ENCODE measurements at regions of chr1 and their contacts with region 1.

Region 1: GRCh38 chr1:150259758-150260669 is 2.4 kb downstream of the CA14 start:
- DNase-seq: peak; percentile 79
- ATAC-seq: peak; percentile 78
- H3K4me3 ChIP-seq: peak overlapping the region; percentile 42 to 78 (median 53); a peak in 5 of 6 replicates
- H3K27ac ChIP-seq: peak overlapping the region; percentile 73
- H3K4me1 ChIP-seq: peaks cover 45% of the 10 kb centered on the region
- H3K27me3 ChIP-seq: no peaks in the 10 kb centered on the region; a peak in 1 of 5 replicates
- CTCF ChIP-seq: 0 out of 2 replicates have a peak, but pooled peaks have one; percentile 17
- EP300 ChIP-seq: peak in 1 of 2 experiments; percentile 26; a peak in 1 of 4 replicates
- POLR2A ChIP-seq: 0 out of 4 replicates have a peak, but pooled peaks of 1 of the 2 experiments have one; percentile 45
- RAD21 ChIP-seq: no peak

Region 2: GRCh38 chr1:150281837-150282653 is 22.0 kb after region 1 on chr1 and contains the start of gene CIART:
- CTCF ChIA-PET with region 1: interaction called, 45 read pairs
- POLR2A ChIA-PET with region 1: interaction called, 24 read pairs
- in situ Hi-C with region 1: no loop called
- intact Hi-C with region 1: loop called (anchors 1 kb)
- DNase-seq: no peak
- ATAC-seq: peak; percentile 19; the same call in 1 of the 3 replicates
- H3K4me3 ChIP-seq: peak within 1 kb of the TSS in 1 of 3 experiments; percentile 33; a peak in 1 of 6 replicates
- H3K27ac ChIP-seq: no peak within 1 kb of the TSS
- H3K4me1 ChIP-seq: peaks cover 33% of the 10 kb centered on the region
- H3K27me3 ChIP-seq: peaks cover 0 to 4% of the 10 kb centered on the region in 2 experiments; a peak in 1 of 5 replicates
- CTCF ChIP-seq: no peak
- EP300 ChIP-seq: no peak
- POLR2A ChIP-seq: no peak
- RAD21 ChIP-seq: no peak
- total RNA-seq, gene CIART: not detected in 2 replicates

Region 3: DNA sequence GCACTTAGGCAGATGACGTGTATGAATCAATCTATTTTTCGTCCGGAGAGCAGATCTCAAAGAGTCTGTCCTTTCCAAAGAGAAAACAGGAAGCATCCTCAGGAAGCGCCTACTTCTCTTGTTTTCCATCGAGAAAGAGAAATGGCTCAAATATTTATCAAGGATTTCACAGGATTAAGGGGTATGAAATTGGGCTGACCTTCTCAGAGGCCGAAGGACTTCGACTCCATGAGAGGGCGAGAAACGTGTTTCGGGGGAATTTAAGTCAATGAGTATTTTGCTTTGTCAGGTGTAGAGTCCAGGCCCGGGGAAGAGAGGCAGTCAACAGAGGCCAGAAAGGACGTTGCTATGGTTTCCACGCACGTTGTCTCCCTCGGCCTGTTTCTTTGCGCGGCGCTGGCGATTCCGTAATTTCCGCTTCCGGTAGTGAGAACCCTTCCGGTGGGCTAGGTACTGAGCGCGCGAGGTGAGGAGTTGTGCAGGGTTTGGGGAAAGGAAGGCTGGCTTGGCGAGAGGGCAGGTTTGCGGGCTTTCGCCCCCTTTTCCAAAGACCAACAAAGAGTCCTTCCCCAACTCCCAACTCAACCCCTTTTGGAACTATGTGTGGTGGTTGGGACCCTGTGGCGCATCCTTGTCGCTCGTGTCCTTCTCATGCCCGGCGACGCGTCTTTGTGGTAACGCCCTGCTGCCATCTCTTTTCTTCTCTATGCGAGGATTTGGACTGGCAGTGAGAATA is 33.6 kb after region 1 on chr1 and contains the start of gene MRPS21:
- CTCF ChIA-PET with region 1: no interaction called
- POLR2A ChIA-PET with region 1: interaction called, 3 read pairs
- in situ Hi-C with region 1: loop called (anchors 5 kb)
- intact Hi-C with region 1: loop called (anchors 1 kb)
- DNase-seq: peak; percentile 94
- ATAC-seq: peak; percentile 99
- H3K4me3 ChIP-seq: peak within 1 kb of the TSS; percentile 81 to 86 (median 85)
- H3K27ac ChIP-seq: peak within 1 kb of the TSS; percentile 90
- H3K4me1 ChIP-seq: peaks cover 38% of the 10 kb centered on the region
- H3K27me3 ChIP-seq: no peaks in the 10 kb centered on the region; a peak in 1 of 5 replicates
- CTCF ChIP-seq: no peak; the same call in 1 of the 2 replicates
- EP300 ChIP-seq: peak in 1 of 2 experiments; percentile 57; a peak in 2 of 4 replicates
- POLR2A ChIP-seq: peak; percentile 95 to 96
- RAD21 ChIP-seq: no peak
- total RNA-seq, gene MRPS21: 64.2 and 77.5 TPM in 2 replicates

Region 4: GRCh38 chr1:150321826-150322166 is 61.8 kb after region 1 on chr1:
- CTCF ChIA-PET with region 1: no interaction called
- POLR2A ChIA-PET with region 1: interaction called, 18 read pairs
- in situ Hi-C with region 1: no loop called
- intact Hi-C with region 1: loop called (anchors 1 kb)
- DNase-seq: no peak
- ATAC-seq: no peak
- H3K4me3 ChIP-seq: peak overlapping the region; percentile 83 to 92 (median 85)
- H3K27ac ChIP-seq: peak overlapping the region; percentile 84
- H3K4me1 ChIP-seq: peaks cover 20% of the 10 kb centered on the region
- H3K27me3 ChIP-seq: no peaks in the 10 kb centered on the region; a peak in 1 of 5 replicates
- CTCF ChIP-seq: no peak
- EP300 ChIP-seq: no peak
- POLR2A ChIP-seq: no peak
- RAD21 ChIP-seq: no peak

Region 5: DNA sequence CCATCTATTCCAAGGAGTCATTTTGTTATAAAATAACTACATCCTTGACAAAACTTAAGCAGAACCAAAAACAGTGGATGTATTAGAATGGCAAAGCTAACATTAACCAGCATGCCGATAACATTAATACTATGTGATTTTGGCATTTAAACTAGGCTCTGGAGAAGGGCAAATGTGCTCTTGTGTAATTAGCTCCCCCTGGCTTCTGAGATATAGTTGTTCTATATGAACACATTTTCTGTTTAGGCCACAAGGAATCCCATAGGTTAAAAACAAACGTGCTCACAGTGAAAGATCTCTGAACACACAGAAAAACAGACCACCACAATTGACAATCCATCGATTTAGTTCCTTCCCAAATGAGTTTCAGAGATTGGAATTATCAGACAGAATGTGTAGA is 169.8 kb after region 1 on chr1:
- CTCF ChIA-PET with region 1: interaction called, 9 read pairs
- POLR2A ChIA-PET with region 1: interaction called, 3 read pairs
- in situ Hi-C with region 1: loop called (anchors 10 kb)
- intact Hi-C with region 1: no loop called
- DNase-seq: peak; percentile 57
- ATAC-seq: peak; percentile 64
- H3K4me3 ChIP-seq: no peak overlapping the region
- H3K27ac ChIP-seq: no peak overlapping the region
- H3K4me1 ChIP-seq: 0 out of 2 replicates have a peak, but pooled peaks cover 4% of the 10 kb centered on the region
- H3K27me3 ChIP-seq: no peaks in the 10 kb centered on the region
- CTCF ChIP-seq: peak; percentile 62
- EP300 ChIP-seq: no peak
- POLR2A ChIP-seq: no peak
- RAD21 ChIP-seq: peak; percentile 35; the same call in 1 of the 2 replicates

Region 6: DNA sequence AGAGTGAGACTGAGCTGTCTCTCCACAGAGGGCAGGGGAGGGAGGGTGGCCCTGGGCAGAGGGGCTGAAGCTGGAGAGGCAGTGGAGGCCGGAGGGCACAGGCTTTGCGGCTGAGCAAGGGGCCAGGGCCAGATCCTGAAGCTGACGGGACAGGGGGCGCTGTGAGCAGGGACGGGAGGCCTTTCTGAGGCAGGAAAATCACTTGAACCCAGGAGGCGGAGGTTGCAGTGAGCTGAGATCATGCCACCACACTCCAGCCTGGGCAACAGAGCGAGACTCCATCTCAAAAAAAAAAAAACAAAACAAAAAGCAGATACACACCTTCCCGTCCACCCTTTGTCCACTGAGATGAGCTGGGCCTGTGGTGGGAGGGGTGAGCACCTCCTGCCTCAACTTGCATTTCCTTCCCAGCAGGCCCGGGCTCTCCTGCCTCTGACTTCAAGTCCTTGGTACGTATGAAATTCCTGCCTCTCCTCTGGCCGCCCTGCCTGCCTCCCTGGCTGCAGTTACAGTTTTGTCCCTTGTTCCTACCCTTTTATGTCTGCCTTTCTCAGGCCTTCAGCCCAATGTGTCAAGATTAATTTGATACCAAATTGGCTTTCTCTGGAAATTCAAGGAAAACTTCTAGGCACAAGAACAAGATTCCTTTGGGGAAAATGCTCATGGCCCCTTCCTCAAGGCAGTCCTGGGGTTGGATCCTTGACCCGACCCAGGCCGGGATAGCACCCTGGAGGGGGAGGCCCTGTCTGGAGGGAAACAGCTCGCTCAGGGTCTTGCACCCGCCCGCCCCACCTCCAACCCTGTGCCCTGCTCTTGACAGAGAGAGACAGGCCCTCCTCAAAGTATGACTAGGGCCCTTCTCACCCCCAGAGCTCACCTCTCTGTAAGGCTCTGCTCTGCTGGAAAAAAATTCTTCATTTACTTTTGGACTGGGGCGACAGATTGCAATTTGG is 278.0 kb after region 1 on chr1:
- CTCF ChIA-PET with region 1: no interaction called
- POLR2A ChIA-PET with region 1: interaction called, 3 read pairs
- in situ Hi-C with region 1: loop called (anchors 10 kb)
- intact Hi-C with region 1: no loop called
- DNase-seq: no peak
- ATAC-seq: peak; percentile 64
- H3K4me3 ChIP-seq: no peak overlapping the region
- H3K27ac ChIP-seq: no peak overlapping the region
- H3K4me1 ChIP-seq: peaks cover 70% of the 10 kb centered on the region
- H3K27me3 ChIP-seq: no peaks in the 10 kb centered on the region; a peak in 1 of 5 replicates
- CTCF ChIP-seq: peak; percentile 61
- EP300 ChIP-seq: no peak
- POLR2A ChIP-seq: no peak
- RAD21 ChIP-seq: no peak

Region 7: DNA sequence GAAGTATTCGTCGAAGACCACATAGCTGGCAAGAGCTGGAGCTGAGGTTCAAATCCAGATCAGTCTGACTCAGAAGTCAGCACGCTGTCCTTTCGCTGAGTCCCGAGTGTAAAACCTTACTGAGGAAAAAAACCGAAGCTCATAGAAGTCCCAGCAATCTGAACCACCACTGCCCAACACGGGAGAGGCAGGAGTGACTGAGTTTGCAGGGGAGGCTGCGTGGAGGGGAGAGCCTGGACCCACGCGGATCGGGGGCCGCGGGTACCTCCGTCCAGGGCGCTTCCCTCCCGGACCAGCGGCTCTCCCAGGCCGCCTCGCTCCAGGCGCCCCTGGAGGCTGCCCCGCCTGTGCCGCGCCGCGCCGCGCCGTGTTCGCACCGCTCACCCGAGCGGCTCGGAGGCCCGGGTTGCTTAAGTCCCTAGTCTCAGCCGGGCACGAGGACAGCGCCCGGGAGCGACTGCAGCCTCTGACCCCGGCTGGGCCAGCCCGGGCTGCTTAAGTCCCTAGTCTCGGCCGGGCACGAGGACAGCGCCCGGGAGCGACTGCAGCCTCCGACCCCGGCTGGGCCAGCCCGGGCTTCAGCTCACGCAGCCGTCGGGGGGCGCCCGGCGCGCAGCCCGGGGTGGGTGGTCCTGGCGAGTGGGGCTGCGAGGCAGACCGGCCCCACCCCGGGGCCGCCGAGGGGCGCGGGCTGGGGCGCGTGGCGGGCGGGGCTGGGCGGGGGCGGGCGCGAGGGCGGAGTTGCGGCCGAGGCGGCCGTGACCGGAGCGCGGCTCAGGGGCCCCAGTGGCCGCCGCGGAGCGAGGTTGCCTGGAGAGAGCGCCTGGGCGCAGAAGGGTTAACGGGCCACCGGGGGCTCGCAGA is 288.9 kb after region 1 on chr1 and contains the start of gene ADAMTSL4:
- CTCF ChIA-PET with region 1: no interaction called
- POLR2A ChIA-PET with region 1: no interaction called
- in situ Hi-C with region 1: no loop called
- intact Hi-C with region 1: loop called (anchors 10 kb)
- DNase-seq: no peak
- ATAC-seq: peak; percentile 67
- H3K4me3 ChIP-seq: peak within 1 kb of the TSS; percentile 62 to 83 (median 63)
- H3K27ac ChIP-seq: peak within 1 kb of the TSS; percentile 57
- H3K4me1 ChIP-seq: peaks cover 61% of the 10 kb centered on the region
- H3K27me3 ChIP-seq: no peaks in the 10 kb centered on the region; a peak in 1 of 5 replicates
- CTCF ChIP-seq: peak; percentile 30; the same call in 1 of the 2 replicates
- EP300 ChIP-seq: no peak
- POLR2A ChIP-seq: peak in 1 of 2 experiments; percentile 45; a peak in 1 of 4 replicates
- RAD21 ChIP-seq: 0 out of 2 replicates have a peak, but pooled peaks have one; percentile 37
- total RNA-seq, gene ADAMTSL4: 1.9 and 3.9 TPM in 2 replicates

Measured in HepG2 (cell line).